H1 (cell line): ENCODE measurements at regions of chr13 and their contacts with region 1.

Region 1: GRCh38 chr13:26946684-26947343 is 186.2 kb upstream of the GPR12 start:
- DNase-seq: no peak
- H3K4me3 ChIP-seq: no peak overlapping the region
- H3K27ac ChIP-seq: no peak overlapping the region
- H3K4me1 ChIP-seq: peaks cover 0 to 3% (median 0%) of the 10 kb centered on the region in 4 experiments; a peak in 1 of 7 replicates
- H3K27me3 ChIP-seq: no peaks in the 10 kb centered on the region
- CTCF ChIP-seq: peak in 2 of 3 experiments; percentile 71 to 82; a peak in 3 of 4 replicates
- EP300 ChIP-seq: no peak
- POLR2A ChIP-seq: no peak
- RAD21 ChIP-seq: peak; percentile 94 to 96

Region 2: GRCh38 chr13:26680123-26680450 is 266.7 kb before region 1 on chr13:
- CTCF ChIA-PET with region 1: no interaction called
- POLR2A ChIA-PET with region 1: no interaction called
- DNase-seq: no peak
- H3K4me3 ChIP-seq: no peak overlapping the region
- H3K27ac ChIP-seq: no peak overlapping the region
- H3K4me1 ChIP-seq: peaks cover 0 to 5% (median 2%) of the 10 kb centered on the region in 4 experiments; a peak in 3 of 7 replicates
- H3K27me3 ChIP-seq: no peaks in the 10 kb centered on the region
- CTCF ChIP-seq: no peak
- EP300 ChIP-seq: no peak
- POLR2A ChIP-seq: no peak
- RAD21 ChIP-seq: no peak

Region 3: GRCh38 chr13:26929971-26930730 is 16.7 kb before region 1 on chr13:
- CTCF ChIA-PET with region 1: interaction called, 10 read pairs
- POLR2A ChIA-PET with region 1: interaction called, 3 read pairs
- DNase-seq: peak; percentile 56 to 96
- H3K4me3 ChIP-seq: peak overlapping the region in 3 of 4 experiments; percentile 20 to 51 (median 23); a peak in 4 of 8 replicates
- H3K27ac ChIP-seq: no peak overlapping the region
- H3K4me1 ChIP-seq: peaks cover 0 to 3% (median 0%) of the 10 kb centered on the region in 4 experiments; a peak in 1 of 7 replicates
- H3K27me3 ChIP-seq: no peaks in the 10 kb centered on the region
- CTCF ChIP-seq: peak; percentile 80 to 86 (median 84)
- EP300 ChIP-seq: no peak
- POLR2A ChIP-seq: no peak; a peak in 1 of 3 replicates
- RAD21 ChIP-seq: peak; percentile 88 to 95

Region 4: GRCh38 chr13:26971990-26972887 is 25.4 kb after region 1 on chr13:
- CTCF ChIA-PET with region 1: interaction called, 22 read pairs
- POLR2A ChIA-PET with region 1: no interaction called
- DNase-seq: peak; percentile 15 to 70
- H3K4me3 ChIP-seq: no peak overlapping the region
- H3K27ac ChIP-seq: no peak overlapping the region
- H3K4me1 ChIP-seq: no peaks in the 10 kb centered on the region; a peak in 3 of 7 replicates
- H3K27me3 ChIP-seq: no peaks in the 10 kb centered on the region; a peak in 1 of 7 replicates
- CTCF ChIP-seq: peak; percentile 60 to 76 (median 74)
- EP300 ChIP-seq: no peak
- POLR2A ChIP-seq: no peak
- RAD21 ChIP-seq: peak; percentile 70 to 79

Region 5: GRCh38 chr13:26985285-26985878 is 38.6 kb after region 1 on chr13:
- CTCF ChIA-PET with region 1: interaction called, 37 read pairs
- POLR2A ChIA-PET with region 1: no interaction called
- DNase-seq: peak in 1 of 2 experiments; percentile 71
- H3K4me3 ChIP-seq: no peak overlapping the region
- H3K27ac ChIP-seq: no peak overlapping the region
- H3K4me1 ChIP-seq: no peaks in the 10 kb centered on the region
- H3K27me3 ChIP-seq: no peaks in the 10 kb centered on the region
- CTCF ChIP-seq: peak; percentile 21 to 87 (median 82)
- EP300 ChIP-seq: no peak
- POLR2A ChIP-seq: no peak
- RAD21 ChIP-seq: peak; percentile 98

Region 6: GRCh38 chr13:27353166-27353583 is 406.4 kb after region 1 on chr13:
- CTCF ChIA-PET with region 1: interaction called, 128 read pairs
- POLR2A ChIA-PET with region 1: no interaction called
- DNase-seq: no peak
- H3K4me3 ChIP-seq: no peak overlapping the region
- H3K27ac ChIP-seq: no peak overlapping the region
- H3K4me1 ChIP-seq: peaks cover 2 to 7% (median 5%) of the 10 kb centered on the region in 4 experiments; a peak in 5 of 7 replicates
- H3K27me3 ChIP-seq: no peaks in the 10 kb centered on the region
- CTCF ChIP-seq: no peak
- EP300 ChIP-seq: no peak
- POLR2A ChIP-seq: no peak
- RAD21 ChIP-seq: no peak